ENCODE measurements at regions of chr5 and their contacts with region 1.

Region 1: GRCh38 chr5:176660860-176661641 is 13.8 kb downstream of the TSPAN17 start:
- DNase-seq: peak; percentile 85
- ATAC-seq: peak; percentile 84
- H3K4me3 Mint-ChIP-seq: no peak overlapping the region
- H3K27ac Mint-ChIP-seq: no peak overlapping the region
- H3K4me1 Mint-ChIP-seq: peaks cover 31% of the 10 kb centered on the region
- H3K27me3 Mint-ChIP-seq: peaks cover 5% of the 10 kb centered on the region

Region 2: GRCh38 chr5:176579323-176579722 is 81.7 kb before region 1 on chr5:
- CTCF ChIA-PET with region 1: no interaction called
- POLR2A ChIA-PET with region 1: no interaction called
- DNase-seq: no peak
- ATAC-seq: no peak
- H3K4me3 Mint-ChIP-seq: no peak overlapping the region
- H3K27ac Mint-ChIP-seq: no peak overlapping the region
- H3K4me1 Mint-ChIP-seq: no peaks in the 10 kb centered on the region
- H3K27me3 Mint-ChIP-seq: no peaks in the 10 kb centered on the region

Region 3: GRCh38 chr5:176606032-176606431 is 55.0 kb before region 1 on chr5:
- CTCF ChIA-PET with region 1: interaction called, 10 read pairs
- POLR2A ChIA-PET with region 1: no interaction called
- DNase-seq: no peak
- ATAC-seq: no peak
- H3K4me3 Mint-ChIP-seq: no peak overlapping the region
- H3K27ac Mint-ChIP-seq: no peak overlapping the region
- H3K4me1 Mint-ChIP-seq: peaks cover 11% of the 10 kb centered on the region
- H3K27me3 Mint-ChIP-seq: peaks cover 21% of the 10 kb centered on the region

Region 4: DNA sequence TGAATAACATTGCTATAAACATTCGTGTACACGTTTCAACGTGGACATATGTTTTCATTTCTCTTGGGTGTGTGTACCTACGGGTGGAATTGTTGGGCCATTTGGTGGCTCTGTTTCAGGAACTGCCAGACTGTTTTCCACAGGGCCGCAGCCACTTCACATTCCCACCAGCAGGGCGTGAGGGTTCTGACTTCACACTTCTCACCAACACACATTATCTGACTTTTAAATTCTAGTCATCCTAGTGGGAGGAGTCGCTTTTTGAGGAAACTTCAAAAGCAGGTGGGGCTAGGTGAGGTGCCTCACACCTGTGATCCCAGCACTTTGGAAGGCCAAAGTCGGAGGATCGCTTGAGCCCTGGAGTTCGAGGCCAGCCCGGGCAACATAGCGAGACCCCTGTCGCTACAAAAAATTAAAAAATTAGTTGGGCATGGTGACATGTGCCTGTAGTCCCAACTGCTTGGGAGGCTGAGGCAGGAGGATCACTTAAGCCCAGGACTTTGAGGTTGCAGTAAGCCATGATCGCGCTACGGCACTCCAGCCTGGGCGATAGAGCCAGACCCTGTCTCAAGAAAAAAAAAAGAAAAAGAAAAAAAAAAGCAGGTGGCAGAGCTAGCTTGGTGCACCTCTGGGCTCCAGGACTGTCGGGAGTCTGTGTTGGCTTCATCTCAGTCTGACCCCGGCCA is 14.8 kb after region 1 on chr5:
- CTCF ChIA-PET with region 1: interaction called, 19 read pairs
- POLR2A ChIA-PET with region 1: interaction called, 3 read pairs
- DNase-seq: no peak
- ATAC-seq: no peak
- H3K4me3 Mint-ChIP-seq: no peak overlapping the region
- H3K27ac Mint-ChIP-seq: no peak overlapping the region
- H3K4me1 Mint-ChIP-seq: no peaks in the 10 kb centered on the region
- H3K27me3 Mint-ChIP-seq: peaks cover 25% of the 10 kb centered on the region

Region 5: GRCh38 chr5:176901260-176902101 is 240.4 kb after region 1 on chr5:
- CTCF ChIA-PET with region 1: interaction called, 17 read pairs
- POLR2A ChIA-PET with region 1: no interaction called
- DNase-seq: no peak
- ATAC-seq: no peak
- H3K4me3 Mint-ChIP-seq: no peak overlapping the region
- H3K27ac Mint-ChIP-seq: peak overlapping the region; percentile 50
- H3K4me1 Mint-ChIP-seq: peaks cover 30% of the 10 kb centered on the region
- H3K27me3 Mint-ChIP-seq: peaks cover 8% of the 10 kb centered on the region

Region 6: GRCh38 chr5:176959051-176959450 is 298.0 kb after region 1 on chr5:
- CTCF ChIA-PET with region 1: interaction called, 40 read pairs
- POLR2A ChIA-PET with region 1: no interaction called
- DNase-seq: no peak
- ATAC-seq: peak; percentile 49
- H3K4me3 Mint-ChIP-seq: no peak overlapping the region
- H3K27ac Mint-ChIP-seq: no peak overlapping the region
- H3K4me1 Mint-ChIP-seq: peaks cover 1% of the 10 kb centered on the region
- H3K27me3 Mint-ChIP-seq: no peaks in the 10 kb centered on the region

Region 7: DNA sequence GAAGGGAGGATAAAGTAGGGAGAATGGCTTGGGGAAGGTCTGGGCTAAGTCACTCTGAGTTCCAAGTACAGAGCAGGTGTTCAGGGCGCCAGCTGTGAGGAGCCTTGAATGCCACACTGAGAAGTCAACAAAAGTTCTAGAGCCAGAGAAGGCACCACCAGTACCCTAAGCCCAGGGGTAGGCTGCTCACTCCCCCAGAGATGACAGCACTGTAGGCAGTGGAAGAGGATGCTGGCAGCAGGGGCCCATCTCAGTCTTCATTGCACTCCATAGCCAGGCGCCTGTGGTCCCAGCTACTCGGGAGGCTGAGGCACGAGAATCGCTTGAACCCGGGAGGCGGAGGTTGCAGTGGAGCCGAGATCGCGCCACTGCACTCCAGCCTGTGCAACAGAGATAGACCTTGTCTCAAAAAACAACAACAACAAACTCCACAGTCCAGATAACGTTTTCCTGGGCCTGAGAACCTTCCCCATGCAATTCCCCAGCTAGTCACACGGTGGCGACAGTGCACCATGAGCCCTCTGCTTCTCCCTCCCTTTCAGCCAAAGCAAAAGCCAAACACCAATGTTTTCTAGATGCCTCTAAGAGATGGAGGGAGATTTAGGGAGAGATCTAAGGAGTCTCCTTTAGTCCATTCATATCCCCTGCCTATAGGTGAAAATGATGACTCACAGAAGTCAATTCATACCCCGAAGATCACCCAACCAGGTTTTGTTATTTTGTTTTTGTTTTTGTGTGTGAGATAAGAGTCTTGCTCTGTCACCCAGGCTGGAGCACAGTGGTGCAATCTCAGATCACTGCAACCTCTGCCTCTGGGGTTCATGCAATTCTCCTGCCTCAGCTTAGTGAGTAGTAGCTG is 452.7 kb after region 1 on chr5:
- CTCF ChIA-PET with region 1: interaction called, 80 read pairs
- POLR2A ChIA-PET with region 1: interaction called, 4 read pairs
- DNase-seq: peak; percentile 87
- ATAC-seq: peak; percentile 67
- H3K4me3 Mint-ChIP-seq: no peak overlapping the region
- H3K27ac Mint-ChIP-seq: peak overlapping the region; percentile 45
- H3K4me1 Mint-ChIP-seq: peaks cover 27% of the 10 kb centered on the region
- H3K27me3 Mint-ChIP-seq: no peaks in the 10 kb centered on the region